Endothelial cell of umbilical vein (primary cell): ENCODE measurements at regions of chr7 and their contacts with region 1.

Region 1: DNA sequence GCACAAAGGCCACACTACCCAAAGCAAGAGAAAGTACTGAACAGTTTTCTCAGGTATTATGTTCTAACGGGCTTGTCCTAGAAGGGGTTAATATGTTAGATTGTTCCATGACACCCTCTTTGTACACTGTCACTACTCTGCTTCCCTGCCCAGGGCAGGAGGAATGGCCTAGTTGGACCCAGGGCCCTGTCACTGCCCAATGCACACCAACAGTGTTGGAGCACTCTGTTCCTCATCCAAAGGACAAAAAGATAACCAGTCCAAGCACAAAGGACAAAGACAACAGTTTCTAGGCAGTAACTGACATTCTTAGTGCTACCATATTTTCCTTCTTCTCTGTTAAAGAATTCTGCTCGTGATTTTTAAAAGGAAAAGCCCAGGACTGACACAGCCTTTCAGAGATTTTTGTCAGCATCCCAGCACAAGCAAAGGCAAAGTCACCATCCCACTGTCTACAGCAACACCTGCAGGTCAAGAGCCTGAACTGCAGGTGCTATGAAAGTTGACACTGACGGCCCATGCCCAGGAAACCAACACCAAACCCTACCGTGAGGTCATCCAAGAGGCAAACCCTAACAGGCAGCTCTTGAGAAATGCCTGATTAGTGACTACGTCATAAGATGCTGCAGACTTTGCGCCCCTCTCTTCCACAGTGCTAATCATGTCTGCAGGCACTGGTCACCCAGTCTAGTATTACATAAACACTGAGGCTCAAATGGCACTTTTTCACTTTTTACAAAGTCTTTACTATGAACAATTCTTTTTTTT is 13.2 kb downstream of the NUDCD3 start:
- DNase-seq: peak; percentile 73
- H3K4me3 ChIP-seq: no peak overlapping the region
- H3K27ac ChIP-seq: peak overlapping the region; percentile 31
- H3K4me1 ChIP-seq: peaks cover 29% of the 10 kb centered on the region
- H3K27me3 ChIP-seq: no peaks in the 10 kb centered on the region
- CTCF ChIP-seq: peak; percentile 95 to 99
- POLR2A ChIP-seq: no peak

Region 2: DNA sequence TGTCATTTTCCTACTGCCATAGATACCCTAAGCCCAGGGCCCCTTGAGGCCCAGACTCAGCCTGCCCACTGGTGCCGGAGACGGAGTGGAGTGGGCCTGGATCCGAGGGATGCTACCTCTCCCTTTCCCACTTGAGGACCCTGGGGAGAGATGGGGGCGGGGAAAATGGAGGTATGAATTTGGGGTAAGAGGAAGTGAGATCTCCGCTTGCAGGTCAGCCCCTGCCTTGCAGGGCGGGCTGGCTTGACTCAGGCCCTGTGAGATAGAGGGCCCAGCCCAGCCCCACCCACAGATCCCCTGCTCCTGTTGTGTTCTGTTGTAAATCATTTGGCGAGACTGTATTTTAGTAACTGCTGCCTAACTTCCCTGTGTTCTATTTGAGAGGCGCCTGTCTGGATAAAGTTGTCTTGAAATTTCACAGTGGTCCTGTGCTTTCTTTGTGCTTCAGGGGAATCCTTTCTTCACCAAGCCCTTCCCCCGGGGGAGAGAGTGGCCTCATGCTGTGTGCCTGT is 263.3 kb before region 1 on chr7:
- CTCF ChIA-PET with region 1: no interaction called
- POLR2A ChIA-PET with region 1: no interaction called
- dilution Hi-C with region 1: no loop called
- intact Hi-C with region 1: loop called (anchors 1 kb)
- DNase-seq: no peak
- H3K4me3 ChIP-seq: no peak overlapping the region
- H3K27ac ChIP-seq: no peak overlapping the region
- H3K4me1 ChIP-seq: no peaks in the 10 kb centered on the region
- H3K27me3 ChIP-seq: no peaks in the 10 kb centered on the region
- CTCF ChIP-seq: no peak
- POLR2A ChIP-seq: no peak

Region 3: GRCh38 chr7:44377681-44378421 is 99.4 kb before region 1 on chr7:
- CTCF ChIA-PET with region 1: interaction called, 7 read pairs
- POLR2A ChIA-PET with region 1: no interaction called
- dilution Hi-C with region 1: no loop called
- intact Hi-C with region 1: loop called (anchors 1 kb)
- DNase-seq: no peak
- H3K4me3 ChIP-seq: no peak overlapping the region
- H3K27ac ChIP-seq: peak overlapping the region; percentile 71
- H3K4me1 ChIP-seq: peaks cover 51% of the 10 kb centered on the region
- H3K27me3 ChIP-seq: no peaks in the 10 kb centered on the region
- CTCF ChIP-seq: no peak
- POLR2A ChIP-seq: no peak